ENCODE measurements at regions of chr3 and their contacts with region 1.

Region 1: DNA sequence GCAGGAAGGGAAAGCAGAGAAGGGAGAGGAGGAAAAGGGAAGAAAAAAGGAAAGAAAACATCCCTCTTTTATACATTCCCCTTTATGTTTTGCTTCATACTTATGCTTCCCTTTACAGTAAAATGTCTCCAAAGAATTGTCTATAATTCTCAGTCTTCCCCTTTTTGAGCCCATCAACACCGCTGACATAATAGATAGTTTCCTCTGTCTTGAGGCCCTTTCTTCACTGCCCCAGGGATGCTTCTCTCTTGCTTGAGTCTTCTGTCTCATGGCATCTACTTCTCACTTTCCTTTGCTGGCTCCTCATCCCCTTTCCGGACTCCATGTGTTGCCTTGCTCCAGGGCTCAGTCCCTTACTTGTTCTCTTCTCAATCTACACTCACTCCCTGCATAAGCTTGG is 99.7 kb upstream of the DAZL start:
- DNase-seq: no peak
- ATAC-seq: no peak
- H3K4me3 ChIP-seq: no peak overlapping the region
- H3K27ac ChIP-seq: no peak overlapping the region
- H3K4me1 ChIP-seq: no peaks in the 10 kb centered on the region
- H3K27me3 ChIP-seq: 0 out of 2 replicates have a peak, but pooled peaks cover 4% of the 10 kb centered on the region
- CTCF ChIP-seq: no peak
- POLR2A ChIP-seq: no peak
- RAD21 ChIP-seq: no peak

Region 2: DNA sequence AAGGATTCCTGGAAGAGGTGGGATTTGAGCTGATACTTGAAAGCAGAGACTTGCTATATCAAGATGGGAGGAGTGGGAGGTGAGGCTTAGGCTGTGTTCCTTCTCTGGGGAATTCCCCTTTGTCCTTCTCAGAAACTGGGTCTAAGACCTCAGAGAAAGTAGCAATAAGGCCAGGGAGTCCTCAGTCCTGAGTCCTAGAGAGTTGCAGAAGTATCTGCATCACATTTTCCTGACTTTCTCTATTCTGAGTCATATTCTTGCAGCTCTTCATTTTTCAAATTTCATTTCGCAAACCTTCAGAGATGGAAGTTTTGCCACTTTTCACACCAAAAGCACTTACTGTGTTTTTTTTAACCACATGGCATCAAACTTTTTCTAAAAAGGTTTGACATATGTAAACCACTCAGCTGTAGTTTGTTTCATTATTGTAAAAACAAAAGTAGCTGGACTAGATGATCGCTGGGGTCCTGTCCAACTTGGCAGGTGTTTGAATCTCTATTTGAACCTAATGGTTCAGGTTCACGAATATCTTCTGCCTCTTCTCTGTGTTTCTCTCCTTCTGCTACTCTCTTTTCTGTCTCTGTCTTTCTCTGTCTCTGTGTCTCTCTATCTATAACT is 1204.7 kb before region 1 on chr3:
- CTCF ChIA-PET with region 1: no interaction called
- POLR2A ChIA-PET with region 1: no interaction called
- dilution Hi-C with region 1: no loop called
- in situ Hi-C with region 1: no loop called
- intact Hi-C with region 1: no loop called
- DNase-seq: no peak
- ATAC-seq: peak; percentile 27; the same call in 1 of the 2 replicates
- H3K4me3 ChIP-seq: no peak overlapping the region
- H3K27ac ChIP-seq: no peak overlapping the region
- H3K4me1 ChIP-seq: no peaks in the 10 kb centered on the region
- H3K27me3 ChIP-seq: no peaks in the 10 kb centered on the region
- CTCF ChIP-seq: no peak
- POLR2A ChIP-seq: no peak
- RAD21 ChIP-seq: no peak

Region 3: GRCh38 chr3:16441371-16441875 is 263.5 kb before region 1 on chr3:
- CTCF ChIA-PET with region 1: no interaction called
- POLR2A ChIA-PET with region 1: no interaction called
- dilution Hi-C with region 1: no loop called
- in situ Hi-C with region 1: no loop called
- intact Hi-C with region 1: no loop called
- DNase-seq: peak; percentile 68
- ATAC-seq: peak; percentile 79
- H3K4me3 ChIP-seq: no peak overlapping the region
- H3K27ac ChIP-seq: peak overlapping the region; percentile 65; the same call in 1 of the 2 replicates
- H3K4me1 ChIP-seq: peaks cover 14% of the 10 kb centered on the region
- H3K27me3 ChIP-seq: no peaks in the 10 kb centered on the region
- CTCF ChIP-seq: no peak
- POLR2A ChIP-seq: no peak
- RAD21 ChIP-seq: no peak

Region 4: GRCh38 chr3:16723978-16724377 is 19.0 kb after region 1 on chr3:
- CTCF ChIA-PET with region 1: no interaction called
- POLR2A ChIA-PET with region 1: no interaction called
- dilution Hi-C with region 1: no loop called
- in situ Hi-C with region 1: no loop called
- intact Hi-C with region 1: loop called (anchors 1 kb)
- DNase-seq: peak; percentile 11
- ATAC-seq: no peak
- H3K4me3 ChIP-seq: no peak overlapping the region
- H3K27ac ChIP-seq: no peak overlapping the region
- H3K4me1 ChIP-seq: no peaks in the 10 kb centered on the region; the same call in 1 of the 2 replicates
- H3K27me3 ChIP-seq: no peaks in the 10 kb centered on the region
- CTCF ChIP-seq: no peak
- POLR2A ChIP-seq: no peak
- RAD21 ChIP-seq: no peak

Region 5: DNA sequence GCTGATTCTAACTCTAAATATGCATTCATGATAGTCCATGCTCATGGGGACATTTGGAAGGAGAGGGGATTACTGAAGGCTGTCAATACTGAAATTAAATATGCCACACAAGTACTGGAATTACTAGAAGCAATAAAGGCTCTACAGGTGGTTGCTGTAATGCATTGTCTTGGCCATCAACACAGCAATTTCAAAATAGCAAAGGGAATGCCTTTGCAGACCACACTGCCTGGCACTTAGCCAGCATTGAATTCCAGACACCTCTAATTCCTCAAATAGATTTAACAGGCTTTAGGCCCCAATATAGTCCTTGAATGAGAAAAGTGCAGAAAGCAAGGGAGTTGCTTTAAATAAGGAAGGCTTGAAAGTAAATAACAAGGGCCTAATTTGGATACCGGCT is 64.0 kb after region 1 on chr3:
- CTCF ChIA-PET with region 1: no interaction called
- POLR2A ChIA-PET with region 1: no interaction called
- dilution Hi-C with region 1: no loop called
- in situ Hi-C with region 1: no loop called
- intact Hi-C with region 1: no loop called
- DNase-seq: no peak
- ATAC-seq: no peak
- H3K4me3 ChIP-seq: no peak overlapping the region
- H3K27ac ChIP-seq: no peak overlapping the region
- H3K4me1 ChIP-seq: no peaks in the 10 kb centered on the region
- H3K27me3 ChIP-seq: peaks cover 1% of the 10 kb centered on the region
- CTCF ChIP-seq: no peak
- POLR2A ChIP-seq: no peak
- RAD21 ChIP-seq: no peak

Measured in IMR-90 (cell line).